ENCODE measurements at regions of chr11 and their contacts with region 1.

Region 1: GRCh38 chr11:119205574-119206510 is at the start of gene CBL:
- DNase-seq: peak; percentile 81
- ATAC-seq: peak; percentile 95
- H3K4me3 ChIP-seq: peak within 1 kb of the TSS; percentile 80 to 96
- H3K27ac ChIP-seq: peak within 1 kb of the TSS; percentile 95
- H3K4me1 ChIP-seq: peaks cover 32% of the 10 kb centered on the region
- H3K27me3 ChIP-seq: no peaks in the 10 kb centered on the region
- CTCF ChIP-seq: peak; percentile 99
- total RNA-seq, gene CBL: 69.9 TPM

Region 2: GRCh38 chr11:118997627-118998387 is 208.0 kb before region 1 on chr11 and contains the start of gene CENATAC:
- CTCF ChIA-PET with region 1: interaction called, 15 read pairs
- POLR2A ChIA-PET with region 1: no interaction called
- in situ Hi-C with region 1: no loop called
- intact Hi-C with region 1: no loop called
- DNase-seq: no peak
- ATAC-seq: peak; percentile 99
- H3K4me3 ChIP-seq: peak within 1 kb of the TSS; percentile 75 to 91
- H3K27ac ChIP-seq: peak within 1 kb of the TSS; percentile 83
- H3K4me1 ChIP-seq: peaks cover 16% of the 10 kb centered on the region
- H3K27me3 ChIP-seq: no peaks in the 10 kb centered on the region
- CTCF ChIP-seq: no peak
- total RNA-seq, gene CENATAC: 45.4 TPM

Region 3: DNA sequence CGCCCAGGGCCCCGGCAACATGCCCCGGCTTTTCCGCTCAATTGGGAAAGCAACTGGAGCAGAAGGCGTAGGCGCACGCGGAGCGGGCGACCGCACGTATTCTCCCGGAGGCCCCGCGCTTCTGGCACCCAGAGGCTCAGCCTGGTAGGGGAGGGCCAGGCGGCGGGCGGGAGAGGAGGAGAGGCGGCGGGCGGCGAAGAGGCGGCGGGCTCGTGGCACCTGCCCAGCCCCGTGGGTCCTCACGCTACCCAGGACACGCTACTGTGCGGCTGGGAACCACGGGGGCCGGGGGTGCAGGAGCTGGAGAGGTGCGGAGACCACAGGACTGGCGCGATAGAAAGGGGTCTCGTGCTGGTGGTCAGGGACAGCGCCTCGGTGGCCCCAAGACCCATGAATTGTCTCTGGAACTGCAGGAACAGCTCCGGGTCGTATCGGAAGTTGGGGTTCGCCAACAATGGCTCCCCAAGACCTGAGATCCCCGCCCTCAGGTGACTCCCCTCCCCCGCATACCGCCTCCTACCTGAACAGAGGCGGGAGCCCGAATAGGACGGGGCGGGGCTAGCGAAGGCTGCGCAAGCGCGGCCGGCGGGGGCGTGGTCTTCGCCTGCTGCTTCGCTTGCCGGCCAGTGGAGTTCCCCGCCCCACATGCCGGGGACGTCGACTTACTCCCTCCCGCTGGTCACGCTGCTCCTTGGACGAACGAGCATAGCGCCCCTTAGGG is 175.4 kb before region 1 on chr11 and contains the start of gene SLC37A4:
- CTCF ChIA-PET with region 1: no interaction called
- POLR2A ChIA-PET with region 1: no interaction called
- in situ Hi-C with region 1: no loop called
- intact Hi-C with region 1: no loop called
- DNase-seq: peak; percentile 93
- ATAC-seq: peak; percentile 92
- H3K4me3 ChIP-seq: peak within 1 kb of the TSS; percentile 75 to 90
- H3K27ac ChIP-seq: peak within 1 kb of the TSS; percentile 79
- H3K4me1 ChIP-seq: peaks cover 13% of the 10 kb centered on the region
- H3K27me3 ChIP-seq: no peaks in the 10 kb centered on the region
- CTCF ChIP-seq: peak; percentile 99; the same call in 1 of the 2 replicates
- total RNA-seq, gene SLC37A4: 33.2 TPM

Region 4: GRCh38 chr11:119155733-119156492 is 49.9 kb before region 1 on chr11:
- CTCF ChIA-PET with region 1: no interaction called
- POLR2A ChIA-PET with region 1: no interaction called
- in situ Hi-C with region 1: no loop called
- intact Hi-C with region 1: no loop called
- DNase-seq: no peak
- ATAC-seq: peak; percentile 69
- H3K4me3 ChIP-seq: no peak overlapping the region
- H3K27ac ChIP-seq: no peak overlapping the region
- H3K4me1 ChIP-seq: no peaks in the 10 kb centered on the region
- H3K27me3 ChIP-seq: no peaks in the 10 kb centered on the region
- CTCF ChIP-seq: no peak

Region 5: DNA sequence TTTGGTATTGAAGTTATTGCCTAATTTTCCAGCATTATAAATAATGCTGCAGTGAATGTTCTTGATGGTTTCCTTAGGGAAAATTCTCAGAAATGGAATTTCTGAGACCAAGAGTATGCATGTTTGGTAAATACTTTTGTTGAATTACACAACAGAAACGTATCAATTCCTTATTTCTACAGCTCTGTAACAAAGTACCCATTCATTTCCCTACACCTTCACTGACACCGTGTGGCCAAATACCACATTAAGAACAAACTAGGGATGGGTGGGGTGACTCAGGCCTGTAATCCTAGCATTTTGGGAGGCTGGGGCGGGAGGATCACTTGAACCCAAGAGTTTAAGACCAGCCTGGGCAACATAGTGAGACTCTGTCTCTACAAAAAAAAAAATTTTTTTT is 89.3 kb after region 1 on chr11:
- CTCF ChIA-PET with region 1: interaction called, 12 read pairs
- POLR2A ChIA-PET with region 1: no interaction called
- in situ Hi-C with region 1: no loop called
- intact Hi-C with region 1: no loop called
- DNase-seq: no peak
- ATAC-seq: peak; percentile 62; the same call in 1 of the 2 replicates
- H3K4me3 ChIP-seq: no peak overlapping the region
- H3K27ac ChIP-seq: no peak overlapping the region
- H3K4me1 ChIP-seq: no peaks in the 10 kb centered on the region
- H3K27me3 ChIP-seq: no peaks in the 10 kb centered on the region
- CTCF ChIP-seq: no peak; the same call in 1 of the 2 replicates

Region 6: DNA sequence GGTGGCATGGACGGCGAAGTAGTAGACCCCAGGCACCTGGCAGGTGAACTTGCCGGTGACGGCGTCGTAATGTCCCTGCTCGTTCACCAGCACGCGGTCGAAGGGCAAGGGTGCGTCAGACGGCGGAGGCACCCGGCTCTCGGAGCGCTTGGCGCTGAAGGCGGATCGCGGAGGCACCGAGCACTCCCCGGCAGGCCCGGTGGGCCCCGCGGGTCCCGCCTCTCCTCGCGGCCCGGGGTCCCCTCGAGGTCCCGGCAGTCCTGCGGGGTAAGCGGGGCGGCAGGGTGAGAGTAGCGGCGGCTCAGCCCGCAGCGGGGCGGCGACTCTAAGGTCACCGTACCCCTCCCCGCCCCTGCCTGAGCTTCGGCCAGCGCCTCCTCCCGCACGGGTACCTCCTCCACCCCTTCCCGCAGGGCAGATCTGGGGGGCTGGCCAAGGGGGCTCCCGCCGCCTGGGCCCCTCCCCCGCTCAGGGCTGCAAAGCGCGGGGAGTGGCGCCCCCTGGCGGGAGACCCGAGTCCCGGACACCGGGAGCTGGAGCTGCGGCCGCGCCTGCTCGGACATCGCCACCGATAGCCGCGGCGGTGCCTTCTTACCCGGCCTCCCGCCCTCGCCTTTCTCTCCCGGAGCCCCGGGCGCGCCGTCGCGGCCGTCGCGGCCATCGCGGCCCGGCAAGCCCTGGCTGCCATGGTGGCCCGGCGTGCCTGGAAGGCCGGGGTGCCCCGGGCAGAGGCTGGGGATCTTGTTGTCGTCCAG is 133.9 kb after region 1 on chr11:
- CTCF ChIA-PET with region 1: interaction called, 13 read pairs
- POLR2A ChIA-PET with region 1: interaction called, 13 read pairs
- in situ Hi-C with region 1: no loop called
- intact Hi-C with region 1: no loop called
- DNase-seq: no peak
- ATAC-seq: peak; percentile 62
- H3K4me3 ChIP-seq: peak overlapping the region; percentile 36 to 48
- H3K27ac ChIP-seq: peak overlapping the region; percentile 24; the same call in 1 of the 2 replicates
- H3K4me1 ChIP-seq: peaks cover 39% of the 10 kb centered on the region
- H3K27me3 ChIP-seq: no peaks in the 10 kb centered on the region
- CTCF ChIP-seq: peak; percentile 100

Region 7: DNA sequence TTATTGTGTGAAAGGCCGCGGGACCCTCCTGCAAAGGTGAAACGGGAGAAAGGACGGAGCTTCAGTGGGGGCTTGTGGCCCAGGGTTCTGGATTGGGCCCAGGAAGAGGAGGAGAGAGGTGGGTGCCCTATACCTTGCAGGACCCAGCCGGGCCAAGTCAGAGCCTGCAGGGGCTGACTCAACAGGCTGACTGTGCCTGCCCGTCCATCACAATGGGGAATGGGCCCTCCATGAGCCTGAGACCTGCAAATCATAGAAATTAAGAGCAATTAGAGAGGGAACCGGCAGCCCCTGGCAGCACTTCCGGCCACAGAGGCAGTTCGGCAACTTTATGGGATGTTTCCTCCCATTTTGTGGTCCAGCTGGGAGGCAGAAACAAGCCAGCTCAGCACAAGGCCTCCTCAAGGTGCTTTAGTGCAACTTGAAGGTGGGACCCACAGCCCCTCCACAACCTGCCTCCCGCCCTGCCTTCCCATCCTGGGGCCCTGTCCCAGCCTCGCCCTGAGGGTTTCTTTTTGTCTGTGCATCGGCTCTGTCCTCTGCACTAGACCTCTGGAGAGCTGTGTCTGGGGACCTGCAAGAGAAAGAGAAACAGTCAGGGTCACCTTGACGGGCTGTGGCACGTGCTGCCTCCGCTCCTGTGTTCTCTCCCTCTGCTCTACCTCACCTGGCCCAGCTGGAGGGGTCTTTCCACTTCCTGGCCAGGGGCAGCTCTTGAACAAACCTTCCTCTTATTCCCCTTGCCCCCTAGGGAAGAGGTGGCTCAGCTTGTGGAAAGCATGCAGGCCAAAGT is 542.2 kb after region 1 on chr11:
- CTCF ChIA-PET with region 1: no interaction called
- POLR2A ChIA-PET with region 1: interaction called, 13 read pairs
- in situ Hi-C with region 1: no loop called
- intact Hi-C with region 1: no loop called
- DNase-seq: no peak
- ATAC-seq: no peak
- H3K4me3 ChIP-seq: no peak overlapping the region
- H3K27ac ChIP-seq: no peak overlapping the region
- H3K4me1 ChIP-seq: no peaks in the 10 kb centered on the region
- H3K27me3 ChIP-seq: peaks cover 9% of the 10 kb centered on the region; the same call in 1 of the 2 replicates
- CTCF ChIP-seq: no peak

Measured in Panc1 (cell line).